ENCODE measurements at regions of chr18 and their contacts with region 1.

Region 1: DNA sequence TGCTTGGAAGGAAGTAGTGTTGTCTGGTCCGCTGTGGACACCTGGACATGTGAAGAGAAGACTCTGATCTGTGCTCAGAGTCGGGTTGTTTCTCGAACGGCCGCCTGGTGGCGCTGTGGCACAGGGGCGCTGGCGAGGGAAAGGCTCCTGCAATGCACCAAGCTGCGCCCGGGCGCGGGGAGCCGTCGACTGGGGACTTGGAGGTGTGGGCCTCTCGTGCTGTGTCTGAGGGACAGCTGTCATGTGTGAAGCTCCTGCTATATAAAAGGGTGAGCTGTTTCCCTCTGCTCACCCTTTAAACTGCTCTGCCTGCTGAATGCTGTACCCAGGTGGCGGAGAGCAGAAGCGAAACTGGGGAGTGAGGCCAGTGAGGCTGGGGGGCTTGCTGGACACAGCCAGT is 44.0 kb downstream of the GNAL start:
- DNase-seq: peak; percentile 46
- H3K4me3 ChIP-seq: no peak overlapping the region
- H3K27ac ChIP-seq: no peak overlapping the region
- H3K4me1 ChIP-seq: no peaks in the 10 kb centered on the region
- H3K27me3 ChIP-seq: no peaks in the 10 kb centered on the region
- CTCF ChIP-seq: peak; percentile 67 to 85 (median 72)
- POLR2A ChIP-seq: no peak

Region 2: GRCh38 chr18:11366410-11366809 is 366.6 kb before region 1 on chr18:
- intact Hi-C with region 1: no loop called
- DNase-seq: no peak
- H3K4me3 ChIP-seq: no peak overlapping the region
- H3K27ac ChIP-seq: no peak overlapping the region
- H3K4me1 ChIP-seq: no peaks in the 10 kb centered on the region
- H3K27me3 ChIP-seq: no peaks in the 10 kb centered on the region
- CTCF ChIP-seq: no peak
- POLR2A ChIP-seq: no peak

Region 3: DNA sequence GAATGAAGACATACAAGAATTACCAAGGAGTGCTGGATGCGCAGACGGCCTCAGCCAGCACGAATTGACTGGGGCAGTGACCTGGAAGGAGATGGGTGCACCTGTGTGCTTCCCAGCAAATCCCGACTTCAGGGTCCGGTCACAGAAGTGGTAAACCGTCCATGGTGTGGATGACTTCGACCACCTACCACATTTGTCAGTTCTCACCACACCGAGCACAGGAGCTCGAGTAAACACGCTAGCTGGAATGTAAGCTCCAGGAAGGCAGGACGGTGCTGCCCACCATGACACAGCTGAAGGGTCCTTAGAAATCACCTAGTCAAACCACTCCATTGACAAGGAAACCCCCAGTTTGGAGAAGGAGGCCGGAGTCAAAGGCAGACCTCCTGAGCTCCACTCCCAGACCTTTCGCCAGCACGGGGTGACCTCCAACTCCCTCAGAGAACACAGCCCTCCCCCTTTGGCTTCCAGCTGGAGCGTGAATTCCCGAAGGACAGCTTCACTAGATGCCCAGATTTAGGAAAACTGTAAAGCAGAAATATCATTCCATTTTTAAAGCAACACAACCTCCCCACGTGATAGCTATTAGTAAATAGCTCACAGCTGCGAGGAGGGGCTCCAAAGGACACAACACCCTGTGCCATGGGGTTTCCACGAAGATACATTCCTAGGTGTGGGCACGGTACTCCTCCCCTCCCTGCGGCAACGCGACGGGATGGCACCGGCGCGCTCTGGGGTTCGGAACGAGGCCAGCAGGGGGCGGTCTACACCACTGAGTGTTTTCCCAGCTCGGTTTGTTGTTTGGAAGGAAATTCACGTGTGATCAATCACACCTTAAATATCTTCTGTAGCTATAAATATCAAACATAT is 78.1 kb before region 1 on chr18:
- intact Hi-C with region 1: loop called (anchors 5 kb)
- DNase-seq: peak; percentile 58
- H3K4me3 ChIP-seq: no peak overlapping the region
- H3K27ac ChIP-seq: no peak overlapping the region
- H3K4me1 ChIP-seq: no peaks in the 10 kb centered on the region
- H3K27me3 ChIP-seq: peaks cover 6% of the 10 kb centered on the region
- CTCF ChIP-seq: peak; percentile 63 to 86 (median 76)
- POLR2A ChIP-seq: no peak

Region 4: GRCh38 chr18:11669271-11669947 is 63.6 kb before region 1 on chr18:
- intact Hi-C with region 1: no loop called
- DNase-seq: peak; percentile 75
- H3K4me3 ChIP-seq: no peak overlapping the region
- H3K27ac ChIP-seq: peak overlapping the region in 1 of 2 donors; percentile 53
- H3K4me1 ChIP-seq: no peaks in the 10 kb centered on the region
- H3K27me3 ChIP-seq: peaks cover 6% of the 10 kb centered on the region
- CTCF ChIP-seq: no peak
- POLR2A ChIP-seq: no peak

Region 5: GRCh38 chr18:11826836-11827235 is 93.8 kb after region 1 on chr18:
- intact Hi-C with region 1: no loop called
- DNase-seq: no peak
- H3K4me3 ChIP-seq: no peak overlapping the region
- H3K27ac ChIP-seq: no peak overlapping the region
- H3K4me1 ChIP-seq: no peaks in the 10 kb centered on the region
- H3K27me3 ChIP-seq: no peaks in the 10 kb centered on the region
- CTCF ChIP-seq: no peak
- POLR2A ChIP-seq: no peak

Region 6: GRCh38 chr18:11872479-11873136 is 139.6 kb after region 1 on chr18:
- intact Hi-C with region 1: loop called (anchors 10 kb)
- DNase-seq: no peak
- H3K4me3 ChIP-seq: no peak overlapping the region
- H3K27ac ChIP-seq: no peak overlapping the region
- H3K4me1 ChIP-seq: no peaks in the 10 kb centered on the region
- H3K27me3 ChIP-seq: no peaks in the 10 kb centered on the region
- CTCF ChIP-seq: peak in 2 of 4 experiments; percentile 11 to 24
- POLR2A ChIP-seq: no peak

Region 7: DNA sequence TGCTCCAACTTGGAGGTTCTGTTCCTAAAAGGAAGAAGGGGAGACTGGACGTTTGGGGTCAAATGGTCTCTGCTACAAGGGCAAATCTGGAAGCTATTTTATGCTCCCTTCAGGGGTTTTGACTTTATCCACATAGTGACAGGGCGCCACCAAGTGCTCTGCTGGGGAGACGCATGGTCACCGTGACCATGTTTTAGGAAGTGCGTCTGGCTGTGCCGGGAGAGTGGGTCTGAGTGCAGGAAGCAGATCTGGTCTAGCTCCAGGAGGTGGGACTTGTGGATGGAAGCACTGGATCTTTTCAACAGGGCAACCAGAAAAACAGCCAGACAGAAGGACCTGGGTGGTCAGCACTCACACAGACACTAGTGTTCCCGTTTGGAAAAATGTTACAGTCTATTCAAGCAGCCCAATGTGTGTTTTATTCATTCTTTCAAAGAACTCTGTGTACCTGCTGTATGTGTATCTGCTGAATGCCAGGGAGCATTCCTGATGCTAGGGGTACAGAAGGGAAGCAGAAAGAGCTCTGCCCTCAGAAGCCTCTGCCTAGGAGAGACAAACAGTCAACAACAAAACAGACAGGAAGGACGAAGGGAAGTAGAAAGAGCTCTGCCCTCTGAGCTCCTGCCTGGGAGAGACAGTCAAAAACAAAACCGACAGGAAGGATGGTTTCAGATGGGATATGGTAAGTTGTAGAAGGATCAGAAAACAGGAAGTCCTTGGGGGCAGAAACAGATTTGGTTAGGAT is 262.6 kb after region 1 on chr18:
- intact Hi-C with region 1: loop called (anchors 5 kb)
- DNase-seq: peak; percentile 65
- H3K4me3 ChIP-seq: no peak overlapping the region
- H3K27ac ChIP-seq: peak overlapping the region; percentile 8 to 53
- H3K4me1 ChIP-seq: no peaks in the 10 kb centered on the region
- H3K27me3 ChIP-seq: no peaks in the 10 kb centered on the region
- CTCF ChIP-seq: peak; percentile 31 to 80 (median 70)
- POLR2A ChIP-seq: no peak

Region 8: GRCh38 chr18:12066910-12067511 is 334.0 kb after region 1 on chr18:
- intact Hi-C with region 1: no loop called
- DNase-seq: no peak
- H3K4me3 ChIP-seq: no peak overlapping the region
- H3K27ac ChIP-seq: no peak overlapping the region
- H3K4me1 ChIP-seq: no peaks in the 10 kb centered on the region
- H3K27me3 ChIP-seq: no peaks in the 10 kb centered on the region
- CTCF ChIP-seq: no peak
- POLR2A ChIP-seq: no peak

Measured in prostate gland (tissue), 2 donors.